ENCODE measurements at regions of chr10 and their contacts with region 1.

Region 1: GRCh38 chr10:60806921-60807320 is 28.6 kb downstream of the CDK1 start:
- DNase-seq: no peak
- ATAC-seq: no peak

Region 2: DNA sequence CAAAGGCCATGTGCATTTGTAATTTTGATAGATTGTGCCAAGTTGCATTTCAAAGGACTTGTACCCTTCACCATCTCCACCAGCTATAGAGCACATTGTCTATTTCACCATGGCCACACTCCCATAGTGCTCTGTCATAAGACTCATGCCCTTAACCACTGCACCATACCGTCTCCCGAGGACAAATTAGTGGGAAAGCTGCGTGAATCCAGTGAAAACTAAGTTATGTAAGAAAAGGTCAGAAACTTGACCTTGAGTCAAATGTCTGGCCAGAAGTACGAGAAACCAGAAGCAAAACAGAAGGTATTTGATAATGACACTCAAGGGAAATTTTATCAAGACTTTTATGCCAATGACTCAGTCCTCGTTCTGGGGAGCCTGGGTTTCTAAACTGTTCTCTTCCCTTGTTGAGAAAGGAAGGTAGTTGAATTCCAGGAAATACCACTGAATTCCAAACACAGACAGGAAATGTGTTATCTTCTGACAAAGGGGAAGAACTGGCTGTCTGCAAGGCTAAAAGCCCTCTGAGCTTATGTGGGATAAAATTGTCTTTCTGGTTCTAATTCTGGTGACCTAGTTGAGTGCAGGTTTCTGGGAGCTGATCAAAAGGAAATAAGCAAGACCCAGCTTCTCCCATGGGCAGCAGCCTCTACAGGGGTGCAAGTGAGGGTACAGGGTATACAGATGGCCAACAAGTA is 21.0 kb after region 1 on chr10:
- intact Hi-C with region 1: loop called (anchors 1 kb)
- DNase-seq: no peak
- ATAC-seq: peak; percentile 87

Region 3: GRCh38 chr10:61682323-61682722 is 875.4 kb after region 1 on chr10:
- intact Hi-C with region 1: no loop called
- DNase-seq: no peak
- ATAC-seq: no peak

Region 4: DNA sequence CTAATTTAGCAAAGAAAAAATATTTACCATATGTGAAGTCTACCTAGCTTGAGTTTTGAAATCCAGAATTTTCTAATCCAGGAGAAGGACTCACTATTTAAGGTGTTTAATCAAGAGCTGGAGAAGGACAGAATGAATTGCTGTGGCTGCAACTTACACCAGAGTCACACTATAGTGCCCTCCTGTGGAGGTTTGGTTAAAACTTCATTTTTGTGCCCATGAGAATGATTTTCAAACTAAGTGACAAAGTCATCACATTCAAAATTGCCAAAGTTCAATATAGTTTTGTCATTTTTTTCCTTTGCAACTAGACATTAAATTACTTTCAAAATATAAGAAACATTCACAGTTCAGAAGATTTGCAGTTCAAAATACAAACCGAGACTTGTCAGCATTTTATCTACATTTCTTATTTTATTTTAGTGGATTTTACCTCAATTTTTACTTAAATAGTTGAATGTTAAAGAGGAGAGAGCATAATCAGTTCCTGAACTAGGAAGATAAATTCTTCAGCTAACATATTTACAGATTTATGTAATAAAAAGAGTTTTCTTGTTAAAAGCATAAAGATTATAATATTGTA is 926.5 kb after region 1 on chr10:
- intact Hi-C with region 1: no loop called
- DNase-seq: no peak
- ATAC-seq: no peak

Region 5: DNA sequence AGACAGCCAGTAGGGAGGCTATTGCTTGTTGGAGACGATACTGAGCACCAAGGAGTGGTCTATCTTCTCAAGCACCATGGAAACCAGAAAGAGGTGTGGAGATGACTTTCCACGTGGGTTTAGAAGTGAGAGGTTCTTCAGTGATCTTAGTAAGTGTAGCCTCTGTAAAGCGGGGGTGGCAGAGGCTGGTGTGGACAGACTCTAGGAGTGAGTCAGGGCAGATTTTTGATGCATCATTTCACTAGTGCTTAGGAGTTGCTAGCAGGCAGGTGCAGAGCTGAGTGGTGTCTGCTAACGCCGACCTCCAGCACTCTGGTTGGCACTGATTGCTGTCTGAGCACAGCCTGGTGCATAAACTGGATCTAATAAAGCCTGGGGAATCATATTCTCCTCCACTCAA is 1919.2 kb after region 1 on chr10:
- intact Hi-C with region 1: no loop called
- DNase-seq: no peak
- ATAC-seq: no peak

Measured in sciatic nerve (tissue), 2 donors.